Activated CD4-positive, alpha-beta T cell treated with anti-CD3 and anti-CD28 coated beads for 36 hours (primary cell): ENCODE measurements at regions of chr9 and their contacts with region 1.

Region 1: GRCh38 chr9:4792572-4793458 is at the start of gene RCL1:
- DNase-seq: peak; percentile 98
- ATAC-seq: peak; percentile 96
- H3K4me3 Mint-ChIP-seq: peak within 1 kb of the TSS; percentile 97
- H3K27ac Mint-ChIP-seq: peak within 1 kb of the TSS; percentile 89
- H3K4me1 Mint-ChIP-seq: peaks cover 44% of the 10 kb centered on the region
- H3K27me3 Mint-ChIP-seq: no peaks in the 10 kb centered on the region
- total RNA-seq, gene RCL1: 27.0 to 36.4 TPM

Region 2: GRCh38 chr9:3415906-3416305 is 1376.9 kb before region 1 on chr9:
- CTCF ChIA-PET with region 1: no interaction called
- POLR2A ChIA-PET with region 1: no interaction called
- intact Hi-C with region 1: no loop called
- DNase-seq: no peak
- ATAC-seq: no peak
- H3K4me3 Mint-ChIP-seq: no peak overlapping the region
- H3K27ac Mint-ChIP-seq: no peak overlapping the region
- H3K4me1 Mint-ChIP-seq: no peaks in the 10 kb centered on the region
- H3K27me3 Mint-ChIP-seq: no peaks in the 10 kb centered on the region

Region 3: GRCh38 chr9:3768698-3769458 is 1023.9 kb before region 1 on chr9:
- CTCF ChIA-PET with region 1: no interaction called
- POLR2A ChIA-PET with region 1: no interaction called
- intact Hi-C with region 1: no loop called
- DNase-seq: no peak
- ATAC-seq: no peak
- H3K4me3 Mint-ChIP-seq: no peak overlapping the region
- H3K27ac Mint-ChIP-seq: no peak overlapping the region
- H3K4me1 Mint-ChIP-seq: no peaks in the 10 kb centered on the region
- H3K27me3 Mint-ChIP-seq: peaks cover 18% of the 10 kb centered on the region

Region 4: DNA sequence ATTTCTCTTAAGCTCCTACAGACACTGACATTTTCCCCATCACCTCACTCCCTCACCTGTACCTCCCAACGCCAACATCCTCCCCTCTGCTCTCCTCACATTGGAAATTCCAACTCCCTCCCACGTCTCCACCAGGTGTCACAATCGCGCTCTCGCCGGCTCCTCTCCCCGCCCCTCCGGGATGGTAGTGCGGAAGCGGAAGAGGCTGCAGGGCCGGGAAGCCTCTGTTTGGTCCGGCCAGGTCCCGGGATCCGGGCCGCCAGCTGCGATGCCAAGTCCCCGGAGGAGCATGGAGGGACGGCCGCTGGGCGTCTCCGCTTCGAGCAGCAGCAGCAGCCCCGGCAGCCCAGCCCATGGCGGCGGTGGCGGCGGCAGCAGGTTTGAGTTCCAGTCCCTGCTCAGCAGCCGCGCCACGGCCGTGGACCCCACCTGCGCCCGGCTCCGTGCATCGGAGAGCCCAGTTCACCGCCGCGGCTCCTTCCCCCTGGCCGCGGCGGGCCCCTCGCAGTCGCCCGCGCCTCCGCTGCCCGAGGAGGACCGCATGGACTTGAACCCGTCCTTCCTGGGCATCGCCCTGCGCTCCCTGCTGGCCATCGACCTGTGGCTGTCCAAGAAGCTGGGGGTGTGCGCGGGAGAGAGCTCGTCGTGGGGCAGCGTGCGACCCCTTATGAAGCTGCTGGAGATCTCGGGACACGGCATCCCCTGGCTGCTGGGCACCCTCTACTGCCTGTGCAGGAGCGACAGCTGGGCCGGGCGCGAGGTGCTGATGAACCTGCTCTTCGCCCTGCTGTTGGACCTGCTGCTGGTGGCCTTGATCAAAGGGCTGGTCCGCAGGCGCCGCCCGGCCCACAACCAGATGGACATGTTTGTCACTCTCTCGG is 130.5 kb before region 1 on chr9 and contains the start of gene PLPP6:
- CTCF ChIA-PET with region 1: no interaction called
- POLR2A ChIA-PET with region 1: no interaction called
- intact Hi-C with region 1: loop called in 1 of 2 experiments (anchors 1 kb)
- DNase-seq: peak; percentile 87
- ATAC-seq: peak; percentile 84
- H3K4me3 Mint-ChIP-seq: peak within 1 kb of the TSS; percentile 82
- H3K27ac Mint-ChIP-seq: peak within 1 kb of the TSS; percentile 86
- H3K4me1 Mint-ChIP-seq: peaks cover 53% of the 10 kb centered on the region
- H3K27me3 Mint-ChIP-seq: no peaks in the 10 kb centered on the region
- total RNA-seq, gene PLPP6: 4.3 to 5.0 TPM

Region 5: GRCh38 chr9:4740638-4741364 is 52.0 kb before region 1 on chr9 and contains the start of gene AK3:
- CTCF ChIA-PET with region 1: interaction called, 3 read pairs
- POLR2A ChIA-PET with region 1: no interaction called
- intact Hi-C with region 1: loop called in 1 of 2 experiments (anchors 2 kb)
- DNase-seq: peak; percentile 91
- ATAC-seq: peak; percentile 87
- H3K4me3 Mint-ChIP-seq: peak within 1 kb of the TSS; percentile 88
- H3K27ac Mint-ChIP-seq: peak within 1 kb of the TSS; percentile 93
- H3K4me1 Mint-ChIP-seq: peaks cover 40% of the 10 kb centered on the region
- H3K27me3 Mint-ChIP-seq: no peaks in the 10 kb centered on the region
- total RNA-seq, gene AK3: 32.6 to 41.0 TPM

Region 6: GRCh38 chr9:4832786-4833579 is 40.2 kb after region 1 on chr9:
- CTCF ChIA-PET with region 1: interaction called, 5 read pairs
- POLR2A ChIA-PET with region 1: no interaction called
- intact Hi-C with region 1: loop called (anchors 1 to 5 kb)
- DNase-seq: peak; percentile 81
- ATAC-seq: peak; percentile 94
- H3K4me3 Mint-ChIP-seq: peak overlapping the region; percentile 16
- H3K27ac Mint-ChIP-seq: peak overlapping the region; percentile 84
- H3K4me1 Mint-ChIP-seq: peaks cover 45% of the 10 kb centered on the region
- H3K27me3 Mint-ChIP-seq: no peaks in the 10 kb centered on the region

Region 7: GRCh38 chr9:4970970-4971641 is 178.3 kb after region 1 on chr9:
- CTCF ChIA-PET with region 1: no interaction called
- POLR2A ChIA-PET with region 1: interaction called, 3 read pairs
- intact Hi-C with region 1: loop called in 1 of 2 experiments (anchors 1 kb)
- DNase-seq: peak; percentile 85
- ATAC-seq: peak; percentile 94
- H3K4me3 Mint-ChIP-seq: no peak overlapping the region
- H3K27ac Mint-ChIP-seq: no peak overlapping the region
- H3K4me1 Mint-ChIP-seq: peaks cover 18% of the 10 kb centered on the region
- H3K27me3 Mint-ChIP-seq: no peaks in the 10 kb centered on the region